K562 (cell line): ENCODE measurements at regions of chr3 and their contacts with region 1.

Region 1: GRCh38 chr3:119759962-119760361 is 21.9 kb upstream of the NR1I2 start:
- DNase-seq: no peak
- ATAC-seq: no peak
- H3K4me3 ChIP-seq: no peak overlapping the region
- H3K27ac ChIP-seq: no peak overlapping the region
- H3K4me1 ChIP-seq: no peaks in the 10 kb centered on the region
- H3K27me3 ChIP-seq: no peaks in the 10 kb centered on the region
- CTCF ChIP-seq: no peak
- EP300 ChIP-seq: no peak
- POLR2A ChIP-seq: no peak
- RAD21 ChIP-seq: no peak

Region 2: GRCh38 chr3:119084371-119085072 is 675.4 kb before region 1 on chr3:
- CTCF ChIA-PET with region 1: no interaction called
- POLR2A ChIA-PET with region 1: no interaction called
- in situ Hi-C with region 1: no loop called
- intact Hi-C with region 1: no loop called
- DNase-seq: no peak
- ATAC-seq: no peak
- H3K4me3 ChIP-seq: no peak overlapping the region
- H3K27ac ChIP-seq: no peak overlapping the region
- H3K4me1 ChIP-seq: no peaks in the 10 kb centered on the region
- H3K27me3 ChIP-seq: no peaks in the 10 kb centered on the region
- CTCF ChIP-seq: no peak
- EP300 ChIP-seq: no peak
- POLR2A ChIP-seq: no peak
- RAD21 ChIP-seq: no peak

Region 3: DNA sequence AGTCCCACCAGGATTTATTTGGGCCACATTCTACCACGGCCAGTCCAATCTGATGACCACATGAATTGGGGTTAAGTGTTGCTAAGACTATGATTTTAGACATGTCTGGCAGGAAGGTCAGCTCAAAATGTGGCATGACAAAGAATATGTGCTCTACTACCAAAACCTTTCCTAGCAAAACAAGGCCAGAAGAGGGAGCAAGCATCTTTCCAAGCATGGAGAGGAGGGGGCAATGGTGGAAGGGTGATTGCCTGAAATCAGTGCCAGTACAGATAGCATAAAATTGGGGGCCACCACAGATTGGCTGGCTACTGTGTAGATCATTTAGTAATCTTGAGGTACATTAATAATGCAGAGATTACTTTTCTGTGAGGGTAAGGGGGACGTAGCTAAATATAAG is 339.8 kb before region 1 on chr3:
- CTCF ChIA-PET with region 1: no interaction called
- POLR2A ChIA-PET with region 1: no interaction called
- in situ Hi-C with region 1: no loop called
- intact Hi-C with region 1: no loop called
- DNase-seq: peak in 1 of 4 experiments; percentile 14
- ATAC-seq: no peak
- H3K4me3 ChIP-seq: no peak overlapping the region
- H3K27ac ChIP-seq: no peak overlapping the region
- H3K4me1 ChIP-seq: peaks cover 4 to 21% of the 10 kb centered on the region in 2 experiments; a peak in 3 of 5 replicates
- H3K27me3 ChIP-seq: no peaks in the 10 kb centered on the region
- CTCF ChIP-seq: peak in 2 of 3 experiments; percentile 12 to 20; a peak in 2 of 6 replicates
- EP300 ChIP-seq: no peak
- POLR2A ChIP-seq: no peak
- RAD21 ChIP-seq: peak in 1 of 2 experiments; percentile 33; a peak in 2 of 4 replicates

Region 4: GRCh38 chr3:119588112-119588511 is 171.8 kb before region 1 on chr3:
- CTCF ChIA-PET with region 1: no interaction called
- POLR2A ChIA-PET with region 1: no interaction called
- in situ Hi-C with region 1: no loop called
- intact Hi-C with region 1: no loop called
- DNase-seq: no peak
- ATAC-seq: no peak
- H3K4me3 ChIP-seq: no peak overlapping the region
- H3K27ac ChIP-seq: no peak overlapping the region
- H3K4me1 ChIP-seq: no peaks in the 10 kb centered on the region; a peak in 1 of 5 replicates
- H3K27me3 ChIP-seq: no peaks in the 10 kb centered on the region
- CTCF ChIP-seq: no peak
- EP300 ChIP-seq: no peak
- POLR2A ChIP-seq: no peak
- RAD21 ChIP-seq: no peak

Region 5: DNA sequence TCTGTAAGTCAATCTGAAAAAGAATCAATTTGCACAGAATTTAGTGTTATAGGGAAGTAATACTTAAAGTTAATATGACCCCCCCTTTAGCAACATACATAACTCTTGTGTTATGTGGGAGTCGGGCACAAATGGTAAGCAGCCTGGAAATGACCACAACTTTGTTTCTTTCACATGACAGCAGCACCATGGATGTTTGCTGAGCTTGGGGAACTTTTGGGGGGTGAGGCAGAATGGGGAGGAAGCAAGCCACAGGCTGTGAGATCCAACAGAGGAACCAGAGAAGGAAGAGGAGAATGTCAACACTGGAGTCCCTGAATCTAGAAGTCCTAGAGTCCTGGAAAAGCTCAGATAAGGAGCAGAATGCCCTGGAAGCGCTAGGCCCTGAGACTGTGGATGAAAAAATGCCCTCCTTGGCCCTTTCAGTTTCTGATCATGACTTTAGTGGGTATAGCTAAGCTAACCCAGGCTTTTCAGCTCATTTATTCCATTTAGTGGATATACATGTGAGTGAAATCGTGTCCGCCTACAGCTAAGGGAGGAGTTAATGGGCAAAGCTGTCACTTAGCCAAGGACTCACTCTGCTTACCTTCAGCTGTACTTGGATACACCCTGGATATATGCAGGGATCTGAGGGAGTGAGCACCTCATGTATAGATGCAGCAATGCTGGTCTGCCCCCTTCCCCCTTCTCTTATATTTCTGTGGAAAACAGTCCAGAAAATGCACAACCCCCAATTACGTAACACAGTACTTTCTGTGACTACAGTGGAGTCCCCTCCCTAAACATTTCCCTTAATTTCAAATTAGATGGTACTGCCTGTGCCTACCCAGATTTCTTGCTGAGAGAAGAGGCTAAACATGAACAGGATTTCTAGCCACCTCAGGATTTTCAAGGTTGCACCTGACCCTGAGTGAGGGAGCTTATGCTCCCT is 18.0 kb before region 1 on chr3:
- CTCF ChIA-PET with region 1: no interaction called
- POLR2A ChIA-PET with region 1: no interaction called
- in situ Hi-C with region 1: no loop called
- intact Hi-C with region 1: no loop called
- DNase-seq: no peak
- ATAC-seq: no peak
- H3K4me3 ChIP-seq: no peak overlapping the region
- H3K27ac ChIP-seq: no peak overlapping the region
- H3K4me1 ChIP-seq: no peaks in the 10 kb centered on the region
- H3K27me3 ChIP-seq: peaks cover 6 to 7% of the 10 kb centered on the region in 2 experiments; a peak in 4 of 5 replicates
- CTCF ChIP-seq: no peak
- EP300 ChIP-seq: no peak
- POLR2A ChIP-seq: no peak
- RAD21 ChIP-seq: no peak

Region 6: GRCh38 chr3:119810018-119810435 is 50.1 kb after region 1 on chr3:
- CTCF ChIA-PET with region 1: no interaction called
- POLR2A ChIA-PET with region 1: no interaction called
- in situ Hi-C with region 1: no loop called
- intact Hi-C with region 1: loop called (anchors 10 kb)
- DNase-seq: no peak
- ATAC-seq: peak; percentile 36; the same call in 2 of the 3 replicates
- H3K4me3 ChIP-seq: no peak overlapping the region
- H3K27ac ChIP-seq: no peak overlapping the region
- H3K4me1 ChIP-seq: peaks cover 0 to 12% of the 10 kb centered on the region in 2 experiments; a peak in 3 of 5 replicates
- H3K27me3 ChIP-seq: peaks cover 0 to 7% of the 10 kb centered on the region in 2 experiments; a peak in 2 of 5 replicates
- CTCF ChIP-seq: no peak
- EP300 ChIP-seq: no peak
- POLR2A ChIP-seq: no peak
- RAD21 ChIP-seq: no peak